A549 (cell line): ENCODE measurements at regions of chr22 and their contacts with region 1.

Region 1: DNA sequence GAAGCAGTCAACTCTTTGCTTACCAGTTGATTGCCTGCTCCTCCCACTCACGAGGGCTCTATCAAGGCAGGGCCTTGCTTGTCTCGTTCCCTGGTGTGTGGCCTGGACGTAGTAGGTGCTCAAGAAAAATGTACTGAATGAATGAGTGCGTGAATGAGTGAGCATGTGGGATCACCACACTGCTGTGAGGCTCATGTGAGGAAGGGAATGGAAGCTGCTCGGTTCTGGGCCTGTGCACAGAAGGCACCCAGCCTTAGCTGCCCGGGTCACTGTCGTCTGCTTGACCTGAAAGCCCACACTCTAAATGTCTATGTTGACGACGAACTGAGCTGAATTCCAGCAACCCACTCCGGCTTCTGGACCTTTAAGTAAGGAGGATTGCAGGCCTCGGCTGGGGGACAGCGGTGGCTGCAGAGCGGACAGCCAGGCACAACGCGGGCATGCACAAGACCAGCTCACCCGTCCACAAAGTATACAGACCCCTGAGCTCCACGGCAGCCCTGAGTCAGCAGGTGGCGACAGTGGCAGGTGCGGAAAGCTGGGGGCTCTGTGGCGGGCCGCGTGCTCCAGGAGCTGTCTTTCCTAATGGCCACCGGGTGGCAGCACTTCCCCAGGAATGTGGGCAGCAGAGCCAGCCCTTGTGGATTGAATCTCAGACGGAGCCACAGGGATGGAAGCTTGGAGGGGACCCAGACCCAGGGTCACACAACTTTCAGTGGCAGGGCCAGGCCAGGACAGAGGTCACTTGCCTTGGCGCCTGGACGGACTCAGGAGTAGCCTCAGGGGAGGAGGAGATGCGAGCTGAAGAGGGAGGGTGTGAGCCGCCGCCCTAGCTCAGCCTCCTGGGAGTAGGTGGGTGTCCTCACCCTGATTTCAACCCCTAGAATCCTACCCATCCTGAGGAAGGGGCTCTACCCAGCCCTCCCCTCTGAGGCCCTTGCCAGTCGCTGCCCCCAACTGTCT is 5.0 kb upstream of the PICK1 start:
- DNase-seq: peak; percentile 75 to 76
- ATAC-seq: peak; percentile 72 to 88
- H3K4me3 ChIP-seq: no peak overlapping the region
- H3K27ac ChIP-seq: peak overlapping the region; percentile 42 to 45; a peak in 3 of 6 replicates
- H3K4me1 ChIP-seq: 0 out of 3 replicates have a peak, but pooled peaks cover 4% of the 10 kb centered on the region
- CTCF ChIP-seq: peak; percentile 88
- EP300 ChIP-seq: no peak
- POLR2A ChIP-seq: no peak
- RAD21 ChIP-seq: peak; percentile 89 to 94

Region 2: GRCh38 chr22:38026130-38027111 is 25.8 kb before region 1 on chr22:
- CTCF ChIA-PET with region 1: interaction called, 12 read pairs
- POLR2A ChIA-PET with region 1: no interaction called
- DNase-seq: no peak
- ATAC-seq: peak in 1 of 2 experiments; percentile 28; a peak in 1 of 6 replicates
- H3K4me3 ChIP-seq: no peak overlapping the region
- H3K27ac ChIP-seq: no peak overlapping the region
- H3K4me1 ChIP-seq: no peaks in the 10 kb centered on the region
- CTCF ChIP-seq: no peak
- EP300 ChIP-seq: no peak
- POLR2A ChIP-seq: no peak
- RAD21 ChIP-seq: no peak

Region 3: GRCh38 chr22:38034274-38034882 is 17.8 kb before region 1 on chr22:
- CTCF ChIA-PET with region 1: interaction called, 21 read pairs
- POLR2A ChIA-PET with region 1: interaction called, 5 read pairs
- DNase-seq: peak; percentile 82 to 85
- ATAC-seq: peak; percentile 92 to 94
- H3K4me3 ChIP-seq: no peak overlapping the region
- H3K27ac ChIP-seq: peak overlapping the region; percentile 88 to 96
- H3K4me1 ChIP-seq: peaks cover 32% of the 10 kb centered on the region
- CTCF ChIP-seq: no peak
- EP300 ChIP-seq: no peak
- POLR2A ChIP-seq: no peak
- RAD21 ChIP-seq: no peak

Region 4: GRCh38 chr22:38040953-38041759 is 11.0 kb before region 1 on chr22:
- CTCF ChIA-PET with region 1: interaction called, 21 read pairs
- POLR2A ChIA-PET with region 1: no interaction called
- DNase-seq: no peak
- ATAC-seq: peak in 1 of 2 experiments; percentile 29; a peak in 2 of 6 replicates
- H3K4me3 ChIP-seq: no peak overlapping the region
- H3K27ac ChIP-seq: no peak overlapping the region
- H3K4me1 ChIP-seq: no peaks in the 10 kb centered on the region
- CTCF ChIP-seq: no peak
- EP300 ChIP-seq: no peak
- POLR2A ChIP-seq: no peak
- RAD21 ChIP-seq: no peak

Region 5: GRCh38 chr22:38069372-38070249 is 17.4 kb after region 1 on chr22:
- CTCF ChIA-PET with region 1: interaction called, 23 read pairs
- POLR2A ChIA-PET with region 1: no interaction called
- DNase-seq: peak in 1 of 2 experiments; percentile 45
- ATAC-seq: peak; percentile 58 to 83; a peak in 4 of 6 replicates
- H3K4me3 ChIP-seq: no peak overlapping the region
- H3K27ac ChIP-seq: no peak overlapping the region
- H3K4me1 ChIP-seq: no peaks in the 10 kb centered on the region
- CTCF ChIP-seq: peak; percentile 49
- EP300 ChIP-seq: no peak
- POLR2A ChIP-seq: no peak
- RAD21 ChIP-seq: peak; percentile 66 to 67

Region 6: DNA sequence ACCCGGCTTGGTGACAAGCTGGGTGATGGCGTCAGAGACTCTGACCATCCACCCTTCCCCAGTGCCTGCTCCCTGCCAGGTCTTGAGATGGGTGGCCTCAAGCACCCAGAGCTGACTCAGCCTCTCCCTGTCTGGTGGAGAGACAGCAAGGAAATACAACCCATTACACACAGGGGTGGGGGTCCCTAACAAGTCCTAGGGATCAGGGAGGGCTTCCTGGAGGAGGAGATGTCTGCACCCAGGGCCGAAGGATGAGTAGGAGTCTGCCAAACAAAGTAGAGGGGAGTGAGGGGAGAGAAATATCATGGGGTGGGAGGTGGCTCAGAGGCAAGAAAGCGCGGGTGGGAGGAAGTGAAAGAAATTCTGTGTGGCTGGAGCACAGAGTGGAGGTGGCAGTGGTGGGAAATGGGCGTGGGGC is 156.4 kb after region 1 on chr22:
- CTCF ChIA-PET with region 1: no interaction called
- POLR2A ChIA-PET with region 1: no interaction called
- DNase-seq: no peak
- ATAC-seq: no peak
- H3K4me3 ChIP-seq: no peak overlapping the region
- H3K27ac ChIP-seq: no peak overlapping the region
- H3K4me1 ChIP-seq: peaks cover 4% of the 10 kb centered on the region; the same call in 1 of the 3 replicates
- CTCF ChIP-seq: no peak
- EP300 ChIP-seq: no peak
- POLR2A ChIP-seq: no peak
- RAD21 ChIP-seq: no peak

Region 7: DNA sequence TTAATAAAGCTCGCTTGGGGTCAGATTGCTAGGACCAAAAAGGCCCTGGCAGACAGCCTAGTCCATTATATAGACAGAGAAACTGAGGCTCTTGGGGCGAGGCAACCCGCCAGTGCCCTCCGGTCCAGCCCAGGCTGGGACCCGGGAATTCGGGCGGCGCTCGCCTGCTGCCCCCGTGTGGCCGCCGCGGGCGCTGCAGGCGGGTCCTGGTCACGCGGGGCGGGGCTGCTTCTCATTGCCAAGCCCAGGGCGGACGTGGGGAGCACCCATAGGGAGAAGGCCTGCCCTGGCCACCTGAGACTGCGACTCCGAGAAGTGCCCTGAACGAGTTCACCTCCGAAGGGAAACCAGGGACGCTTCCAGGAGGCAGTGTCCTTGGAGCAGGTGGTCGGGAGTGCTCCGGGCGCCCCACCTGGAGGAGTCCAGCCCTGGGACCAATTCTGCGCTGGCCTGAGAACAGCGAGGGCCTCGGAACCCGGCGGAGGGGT is 301.0 kb after region 1 on chr22:
- CTCF ChIA-PET with region 1: interaction called, 13 read pairs
- POLR2A ChIA-PET with region 1: no interaction called
- DNase-seq: peak; percentile 52 to 56
- ATAC-seq: peak; percentile 64 to 86
- H3K4me3 ChIP-seq: no peak overlapping the region
- H3K27ac ChIP-seq: no peak overlapping the region
- H3K4me1 ChIP-seq: no peaks in the 10 kb centered on the region
- CTCF ChIP-seq: peak; percentile 79
- EP300 ChIP-seq: no peak
- POLR2A ChIP-seq: no peak
- RAD21 ChIP-seq: peak; percentile 75 to 89

Region 8: GRCh38 chr22:38569972-38570778 is 518.0 kb after region 1 on chr22 and contains the start of gene DMC1:
- CTCF ChIA-PET with region 1: interaction called, 43 read pairs
- POLR2A ChIA-PET with region 1: no interaction called
- DNase-seq: peak; percentile 60 to 91
- ATAC-seq: peak; percentile 87 to 93
- H3K4me3 ChIP-seq: peak within 1 kb of the TSS; percentile 65
- H3K27ac ChIP-seq: peak within 1 kb of the TSS; percentile 73 to 93
- H3K4me1 ChIP-seq: peaks cover 7% of the 10 kb centered on the region; the same call in 2 of the 3 replicates
- CTCF ChIP-seq: no peak
- EP300 ChIP-seq: no peak
- POLR2A ChIP-seq: 0 out of 2 replicates have a peak, but pooled peaks have one; percentile 26
- RAD21 ChIP-seq: no peak
- polyA plus RNA-seq, gene DMC1: 3.4 and 5.7 TPM in 2 replicates